ENCODE measurements at regions of chr18 and their contacts with region 1.

Region 1: DNA sequence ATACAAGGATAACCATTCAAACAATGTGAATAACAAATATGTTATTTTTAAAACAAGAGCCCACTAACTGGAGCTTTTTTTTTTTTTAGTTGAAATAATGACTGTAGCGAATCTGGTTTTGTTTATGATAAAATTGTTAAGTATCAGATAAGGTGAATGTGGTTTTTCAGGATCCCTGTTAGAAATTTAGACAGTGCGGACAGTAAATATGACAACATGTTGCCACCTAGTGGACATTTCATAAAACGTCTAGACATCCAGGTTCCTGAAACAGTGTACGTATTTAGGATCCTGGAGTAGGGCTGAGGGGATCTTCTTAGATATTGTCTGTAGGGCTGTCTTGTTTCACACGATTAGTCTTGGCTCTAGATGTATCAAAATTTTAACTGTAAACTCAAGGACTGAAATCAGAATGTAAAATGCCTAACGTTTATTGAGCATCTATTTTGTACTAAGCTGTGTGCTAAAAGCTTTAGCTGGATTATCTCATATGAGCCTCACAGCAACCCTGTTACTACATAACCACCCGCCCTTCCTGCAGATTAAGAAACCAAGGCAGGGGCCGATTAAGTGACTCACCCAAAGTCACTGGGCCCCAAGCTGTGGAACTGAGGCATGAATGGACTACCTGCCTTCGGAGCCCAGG is 23.9 kb upstream of the CCDC68 start:
- DNase-seq: peak in 1 of 35 experiments; percentile 59
- ATAC-seq: no peak
- H3K4me3 ChIP-seq: no peak overlapping the region
- H3K4me3 Mint-ChIP-seq: no peak overlapping the region
- H3K27ac ChIP-seq: no peak overlapping the region
- H3K27ac Mint-ChIP-seq: no peak overlapping the region
- H3K4me1 ChIP-seq: no peaks in the 10 kb centered on the region
- H3K4me1 Mint-ChIP-seq: no peaks in the 10 kb centered on the region
- H3K27me3 ChIP-seq: no peaks in the 10 kb centered on the region
- H3K27me3 Mint-ChIP-seq: peaks cover 6% of the 10 kb centered on the region in 2 donors

Region 2: DNA sequence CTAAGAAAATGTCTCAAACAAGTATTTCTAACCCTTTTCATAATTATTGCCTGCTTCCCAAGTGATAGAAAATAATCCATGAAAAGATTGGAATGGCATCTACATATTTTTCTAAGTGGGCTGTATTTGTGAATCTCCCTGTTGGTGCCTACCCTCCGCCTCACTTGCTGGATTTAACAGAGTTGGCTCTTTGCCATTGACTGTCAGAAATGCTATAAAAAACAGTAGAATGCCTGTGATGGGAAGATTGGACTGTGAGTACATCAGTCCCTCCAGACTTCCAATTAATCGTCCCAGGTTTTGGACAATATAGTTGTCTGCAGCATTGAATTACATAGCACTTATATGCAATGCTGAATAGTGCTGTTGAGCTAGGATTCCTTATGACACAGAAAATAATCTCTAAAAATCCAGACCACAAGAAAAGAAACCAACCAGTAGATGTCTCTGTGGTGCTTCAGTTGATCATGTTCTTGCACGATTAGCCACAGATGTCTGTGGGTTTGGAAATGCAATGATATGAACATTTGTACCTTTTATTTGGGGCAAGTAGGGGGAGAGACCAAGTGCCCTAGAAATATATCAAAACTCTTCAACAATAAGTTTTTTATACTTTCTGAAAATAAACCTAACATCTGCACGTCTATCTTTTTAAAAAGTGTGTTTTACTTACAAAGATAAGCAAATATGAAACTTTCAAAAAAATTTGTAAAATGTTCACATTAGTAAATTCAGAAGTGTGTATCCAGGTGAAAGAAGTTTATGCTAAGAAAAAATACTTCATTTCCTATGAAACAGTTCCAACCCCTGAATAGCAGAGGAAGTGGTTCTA is 303.6 kb before region 1 on chr18:
- CTCF ChIA-PET with region 1: interaction called, 3 to 10 read pairs
- POLR2A ChIA-PET with region 1: no interaction called
- DNase-seq: peak in 2 of 35 experiments; percentile 2 to 55
- ATAC-seq: peak in 1 of 4 experiments; percentile 32
- H3K4me3 ChIP-seq: no peak overlapping the region
- H3K4me3 Mint-ChIP-seq: no peak overlapping the region
- H3K27ac ChIP-seq: no peak overlapping the region
- H3K27ac Mint-ChIP-seq: no peak overlapping the region
- H3K4me1 ChIP-seq: no peaks in the 10 kb centered on the region
- H3K4me1 Mint-ChIP-seq: peaks cover 0 to 2% (median 0%) of the 10 kb centered on the region in 3 donors
- H3K27me3 ChIP-seq: no peaks in the 10 kb centered on the region
- H3K27me3 Mint-ChIP-seq: peaks cover under 1 to 6% of the 10 kb centered on the region in 2 donors

Region 3: DNA sequence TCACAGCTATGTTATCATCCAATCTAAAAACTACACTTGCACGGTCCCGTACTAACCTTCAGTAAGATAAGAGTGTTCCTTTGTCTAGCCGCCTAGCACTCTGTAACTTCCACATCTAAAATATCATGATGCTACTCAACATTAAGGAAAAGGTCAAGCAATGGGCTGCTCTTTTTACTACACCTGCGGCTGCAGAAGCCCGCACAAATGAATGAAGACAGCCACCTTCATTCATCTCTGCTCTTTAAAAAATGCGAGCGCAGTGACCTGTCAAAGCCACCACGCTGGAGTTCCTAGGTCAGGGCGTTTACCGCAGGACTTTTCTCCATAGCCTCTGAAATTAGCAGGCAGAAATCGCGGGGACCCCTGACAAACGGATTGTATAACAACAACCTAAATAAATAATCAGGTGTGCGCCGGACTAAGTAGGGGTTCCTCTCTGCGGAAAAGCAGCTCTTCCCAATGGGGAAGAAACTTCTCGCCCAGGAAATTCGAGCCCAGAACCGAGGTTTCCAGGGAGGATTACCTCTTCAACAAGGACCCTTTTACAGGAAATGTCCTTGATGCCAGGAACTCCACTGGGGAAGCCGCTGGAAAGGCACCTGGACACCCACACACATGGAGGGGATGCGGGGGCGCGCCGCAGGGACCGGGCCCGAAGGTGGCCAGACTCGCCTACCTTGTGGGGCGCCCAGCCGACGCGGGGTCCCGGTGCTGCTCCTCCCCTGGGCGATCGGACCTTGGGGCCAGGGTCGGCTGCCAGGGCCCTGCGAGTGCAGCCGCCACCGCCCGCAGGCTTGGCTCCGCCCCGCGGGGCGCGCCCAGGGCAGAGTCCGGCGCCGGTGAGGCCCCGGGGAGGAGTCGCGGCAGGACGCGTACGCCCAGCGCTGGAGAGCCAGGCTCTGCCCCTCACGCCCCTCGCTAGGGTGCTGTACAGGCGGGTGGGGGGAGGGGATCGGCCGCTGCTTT is 24.2 kb before region 1 on chr18 and contains the start of gene CCDC68:
- CTCF ChIA-PET with region 1: interaction called in 1 of 2 experiments, 10 read pairs
- POLR2A ChIA-PET with region 1: no interaction called
- DNase-seq: no peak
- ATAC-seq: no peak
- H3K4me3 ChIP-seq: peak within 1 kb of the TSS in 1 of 2 donors; percentile 51
- H3K4me3 Mint-ChIP-seq: peak within 1 kb of the TSS in 1 of 3 donors; percentile 47
- H3K27ac ChIP-seq: no peak within 1 kb of the TSS
- H3K27ac Mint-ChIP-seq: peak within 1 kb of the TSS in 1 of 2 donors; percentile 7
- H3K4me1 ChIP-seq: no peaks in the 10 kb centered on the region
- H3K4me1 Mint-ChIP-seq: peaks cover 0 to 6% (median 4%) of the 10 kb centered on the region in 3 donors
- H3K27me3 ChIP-seq: peaks cover 7 to 18% of the 10 kb centered on the region in 2 experiments
- H3K27me3 Mint-ChIP-seq: peaks cover 47 to 50% of the 10 kb centered on the region in 2 donors
- total RNA-seq, gene CCDC68: 0.13 TPM in 1 of 5 donors, not detected in the others

Region 4: DNA sequence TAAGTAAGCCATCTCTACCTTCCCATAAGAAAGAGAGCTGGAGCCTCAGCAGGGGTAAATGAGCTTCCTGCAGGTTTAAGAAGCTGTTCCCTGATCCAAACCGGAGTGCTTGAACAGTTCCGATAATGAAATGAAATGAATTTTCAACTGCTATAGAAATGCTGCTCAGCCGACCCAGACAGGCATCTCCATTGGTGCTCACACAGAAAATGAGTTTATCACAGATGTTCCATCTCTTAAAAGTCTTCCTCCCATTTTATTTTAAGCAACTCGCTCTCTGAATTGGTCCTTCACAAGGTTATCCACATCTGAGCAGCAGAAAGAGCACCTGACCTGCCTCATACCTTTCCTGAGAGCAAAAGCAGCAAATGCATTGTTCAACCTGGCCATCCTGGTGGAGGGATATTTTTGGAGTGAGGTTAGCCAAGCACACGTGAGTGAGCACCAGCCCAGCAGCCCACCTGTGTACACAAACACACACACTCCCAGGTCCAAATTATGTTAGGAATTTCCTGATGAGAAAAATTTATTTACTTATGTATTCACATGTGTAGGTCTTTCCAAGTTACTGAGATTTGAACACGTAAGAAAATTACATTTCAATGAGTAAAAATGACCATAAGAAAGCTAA is 18.3 kb after region 1 on chr18:
- CTCF ChIA-PET with region 1: no interaction called
- POLR2A ChIA-PET with region 1: no interaction called
- DNase-seq: no peak
- ATAC-seq: no peak
- H3K4me3 ChIP-seq: no peak overlapping the region
- H3K4me3 Mint-ChIP-seq: no peak overlapping the region
- H3K27ac ChIP-seq: no peak overlapping the region
- H3K27ac Mint-ChIP-seq: no peak overlapping the region
- H3K4me1 ChIP-seq: no peaks in the 10 kb centered on the region
- H3K4me1 Mint-ChIP-seq: no peaks in the 10 kb centered on the region
- H3K27me3 ChIP-seq: peaks cover 0 to 5% of the 10 kb centered on the region in 2 experiments
- H3K27me3 Mint-ChIP-seq: peaks cover 2 to 3% of the 10 kb centered on the region in 2 donors

Measured in T-cell (primary cell).